Activated CD4-positive, alpha-beta memory T cell treated with anti-CD3 and anti-CD28 coated beads, Interleukin-2, amount 10 ng/mL, durations not matched to agents 7 days and 5 days (primary cell): ENCODE measurements at regions of chr7 and their contacts with region 1.

Region 1: GRCh38 chr7:86469680-86470295 is 173.9 kb upstream of the GRM3 start:
- DNase-seq: peak; percentile 52
- H3K4me3 Mint-ChIP-seq: no peak overlapping the region
- H3K27ac Mint-ChIP-seq: no peak overlapping the region
- H3K4me1 Mint-ChIP-seq: no peaks in the 10 kb centered on the region
- H3K27me3 Mint-ChIP-seq: no peaks in the 10 kb centered on the region

Region 2: DNA sequence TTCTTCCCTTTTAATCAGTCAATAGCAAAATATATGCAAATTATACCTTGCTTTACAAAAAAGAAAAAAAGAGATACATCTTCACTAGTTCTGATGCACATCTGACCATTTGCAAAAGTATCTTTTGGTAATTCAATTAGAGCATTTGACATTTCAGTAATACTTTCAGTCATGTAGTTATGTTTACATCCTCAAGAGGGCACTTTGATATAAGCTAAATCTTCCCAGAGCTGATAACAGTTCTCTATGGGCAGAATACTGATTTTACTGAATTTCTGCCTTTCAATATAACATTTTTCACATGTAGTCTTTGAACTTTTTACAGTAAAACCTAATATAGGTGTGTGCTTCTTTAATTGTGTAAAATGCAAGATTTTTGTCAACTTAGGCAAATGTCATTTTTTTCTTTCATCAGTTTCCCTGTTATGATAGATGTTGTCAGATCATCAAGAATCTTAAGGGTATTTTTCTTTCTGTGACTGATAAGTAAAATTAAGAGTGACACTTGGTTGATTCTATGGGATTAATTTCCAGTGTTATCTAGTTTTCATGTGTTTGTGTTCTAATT is 579.5 kb before region 1 on chr7:
- CTCF ChIA-PET with region 1: interaction called, 10 read pairs
- POLR2A ChIA-PET with region 1: no interaction called
- DNase-seq: no peak
- H3K4me3 Mint-ChIP-seq: no peak overlapping the region
- H3K27ac Mint-ChIP-seq: no peak overlapping the region
- H3K4me1 Mint-ChIP-seq: no peaks in the 10 kb centered on the region
- H3K27me3 Mint-ChIP-seq: no peaks in the 10 kb centered on the region

Region 3: DNA sequence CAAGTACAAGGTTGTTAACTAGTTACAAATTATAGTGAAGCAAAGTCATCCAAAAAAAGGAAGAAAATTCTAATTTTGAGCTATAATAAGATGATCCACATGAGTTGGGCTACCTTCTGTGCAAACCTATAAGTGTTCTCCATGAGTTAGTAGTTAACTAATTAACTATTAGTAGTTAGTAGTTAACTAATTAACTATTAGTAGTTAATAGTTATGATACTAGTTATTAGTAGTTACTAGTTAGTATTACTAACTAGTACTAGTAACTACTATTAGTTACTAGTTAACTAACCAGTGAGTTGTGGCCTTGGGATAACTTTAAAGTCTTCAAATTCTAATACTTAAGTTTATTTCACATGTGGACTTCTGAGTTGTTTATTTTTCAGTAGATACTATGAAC is 279.4 kb before region 1 on chr7:
- CTCF ChIA-PET with region 1: no interaction called
- POLR2A ChIA-PET with region 1: no interaction called
- DNase-seq: no peak
- H3K4me3 Mint-ChIP-seq: no peak overlapping the region
- H3K27ac Mint-ChIP-seq: no peak overlapping the region
- H3K4me1 Mint-ChIP-seq: no peaks in the 10 kb centered on the region
- H3K27me3 Mint-ChIP-seq: no peaks in the 10 kb centered on the region